IMR-90 (cell line): ENCODE measurements at regions of chr9 and their contacts with region 1.

Region 1: DNA sequence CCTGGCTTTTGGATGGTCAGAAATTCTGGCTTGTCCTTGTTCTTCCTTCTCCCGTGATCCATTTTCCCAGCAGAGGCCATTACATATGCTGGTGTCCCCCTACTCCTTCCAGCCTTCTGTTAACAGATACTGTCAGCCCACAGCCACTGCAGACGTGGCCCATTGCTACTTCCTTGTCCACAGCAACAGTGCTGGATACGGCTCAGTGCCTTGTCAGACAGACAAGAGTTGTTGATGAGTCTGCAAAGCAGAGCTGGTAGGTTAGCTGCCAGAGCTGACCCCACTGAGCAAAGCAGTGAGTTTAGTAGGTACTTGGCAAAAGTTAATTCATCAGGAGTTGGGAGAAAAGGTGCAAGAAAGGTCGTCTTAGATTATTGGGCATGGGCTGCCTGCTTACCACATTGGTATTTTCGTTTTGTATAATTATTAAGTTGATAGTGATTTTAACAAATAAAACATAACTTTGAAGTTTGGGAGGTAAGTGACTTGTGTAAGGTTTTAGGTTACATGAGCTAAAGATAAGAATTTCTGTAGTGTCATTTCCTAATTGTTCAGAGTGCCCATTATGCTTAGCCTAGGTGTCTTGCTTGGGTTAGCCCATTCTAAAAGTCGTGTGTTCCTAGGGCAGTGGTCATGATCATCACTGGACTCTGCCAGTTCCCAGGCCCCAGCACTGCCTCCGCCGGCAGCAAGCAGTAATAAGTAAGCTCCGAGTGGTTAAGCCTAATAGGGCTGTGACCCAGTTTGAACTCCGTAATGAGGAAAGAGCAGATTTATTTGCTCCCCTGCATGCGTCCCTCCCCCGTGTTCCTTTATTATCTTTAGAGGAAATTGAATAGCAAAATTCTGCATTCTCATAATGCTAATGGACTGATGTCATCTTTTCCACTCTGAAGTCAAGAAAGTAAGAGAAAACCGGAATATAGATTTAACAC is 292.0 kb downstream of the FANCC start:
- DNase-seq: peak; percentile 94
- ATAC-seq: peak; percentile 83
- H3K4me3 ChIP-seq: no peak overlapping the region
- H3K27ac ChIP-seq: peak overlapping the region; percentile 64
- H3K4me1 ChIP-seq: peaks cover 32% of the 10 kb centered on the region
- H3K27me3 ChIP-seq: no peaks in the 10 kb centered on the region
- CTCF ChIP-seq: peak; percentile 48
- POLR2A ChIP-seq: peak; percentile 39; the same call in 1 of the 2 replicates
- RAD21 ChIP-seq: peak; percentile 52

Region 2: GRCh38 chr9:94827584-94828304 is 197.7 kb before region 1 on chr9:
- CTCF ChIA-PET with region 1: no interaction called
- POLR2A ChIA-PET with region 1: no interaction called
- dilution Hi-C with region 1: no loop called
- in situ Hi-C with region 1: no loop called
- intact Hi-C with region 1: no loop called
- DNase-seq: peak; percentile 52
- ATAC-seq: peak; percentile 68
- H3K4me3 ChIP-seq: no peak overlapping the region
- H3K27ac ChIP-seq: peak overlapping the region; percentile 67; the same call in 1 of the 2 replicates
- H3K4me1 ChIP-seq: peaks cover 4% of the 10 kb centered on the region
- H3K27me3 ChIP-seq: no peaks in the 10 kb centered on the region
- CTCF ChIP-seq: no peak
- POLR2A ChIP-seq: no peak
- RAD21 ChIP-seq: no peak

Region 3: GRCh38 chr9:95036676-95037075 is 11.2 kb after region 1 on chr9:
- CTCF ChIA-PET with region 1: interaction called, 10 read pairs
- POLR2A ChIA-PET with region 1: no interaction called
- dilution Hi-C with region 1: no loop called
- in situ Hi-C with region 1: no loop called
- intact Hi-C with region 1: no loop called
- DNase-seq: no peak
- ATAC-seq: peak; percentile 12; the same call in 1 of the 2 replicates
- H3K4me3 ChIP-seq: no peak overlapping the region
- H3K27ac ChIP-seq: peak overlapping the region; percentile 55
- H3K4me1 ChIP-seq: peaks cover 25% of the 10 kb centered on the region
- H3K27me3 ChIP-seq: no peaks in the 10 kb centered on the region
- CTCF ChIP-seq: no peak
- POLR2A ChIP-seq: no peak
- RAD21 ChIP-seq: no peak

Region 4: GRCh38 chr9:95249986-95250385 is 224.5 kb after region 1 on chr9:
- CTCF ChIA-PET with region 1: no interaction called
- POLR2A ChIA-PET with region 1: no interaction called
- dilution Hi-C with region 1: no loop called
- in situ Hi-C with region 1: no loop called
- intact Hi-C with region 1: no loop called
- DNase-seq: no peak
- ATAC-seq: no peak
- H3K4me3 ChIP-seq: no peak overlapping the region
- H3K27ac ChIP-seq: no peak overlapping the region
- H3K4me1 ChIP-seq: no peaks in the 10 kb centered on the region
- H3K27me3 ChIP-seq: no peaks in the 10 kb centered on the region
- CTCF ChIP-seq: no peak
- POLR2A ChIP-seq: no peak
- RAD21 ChIP-seq: no peak

Region 5: GRCh38 chr9:95666096-95666784 is 640.8 kb after region 1 on chr9:
- CTCF ChIA-PET with region 1: no interaction called
- POLR2A ChIA-PET with region 1: no interaction called
- dilution Hi-C with region 1: no loop called
- in situ Hi-C with region 1: no loop called
- intact Hi-C with region 1: no loop called
- DNase-seq: no peak
- ATAC-seq: no peak
- H3K4me3 ChIP-seq: no peak overlapping the region
- H3K27ac ChIP-seq: no peak overlapping the region
- H3K4me1 ChIP-seq: no peaks in the 10 kb centered on the region
- H3K27me3 ChIP-seq: peaks cover 10% of the 10 kb centered on the region
- CTCF ChIP-seq: no peak
- POLR2A ChIP-seq: no peak
- RAD21 ChIP-seq: no peak